ENCODE measurements at regions of chr10 and their contacts with region 1.

Region 1: GRCh38 chr10:97425964-97426775 is at the start of gene PGAM1:
- DNase-seq: peak; percentile 91 to 99 (median 93)
- ATAC-seq: peak; percentile 81
- H3K4me3 ChIP-seq: peak within 1 kb of the TSS; percentile 84
- H3K4me3 Mint-ChIP-seq: peak within 1 kb of the TSS; percentile 90
- H3K27ac ChIP-seq: peak within 1 kb of the TSS; percentile 85 to 86
- H3K27ac Mint-ChIP-seq: peak within 1 kb of the TSS; percentile 92
- H3K4me1 ChIP-seq: peaks cover 24% of the 10 kb centered on the region
- H3K4me1 Mint-ChIP-seq: peaks cover 44% of the 10 kb centered on the region
- H3K27me3 ChIP-seq: no peaks in the 10 kb centered on the region
- H3K27me3 Mint-ChIP-seq: no peaks in the 10 kb centered on the region
- CTCF ChIP-seq: peak; percentile 47
- total RNA-seq, gene PGAM1: 56.7 to 56.8 TPM

Region 2: GRCh38 chr10:97407211-97407951 is 18.8 kb before region 1 on chr10:
- CTCF ChIA-PET with region 1: interaction called, 12 read pairs
- POLR2A ChIA-PET with region 1: no interaction called
- intact Hi-C with region 1: loop called (anchors 1 to 2 kb)
- DNase-seq: peak in 8 of 9 experiments; percentile 41 to 87 (median 66)
- ATAC-seq: peak; percentile 99
- H3K4me3 ChIP-seq: peak overlapping the region in 1 of 2 experiments; percentile 27
- H3K4me3 Mint-ChIP-seq: peak overlapping the region; percentile 45
- H3K27ac ChIP-seq: peak overlapping the region in 1 of 2 experiments; percentile 51
- H3K27ac Mint-ChIP-seq: peak overlapping the region; percentile 37
- H3K4me1 ChIP-seq: peaks cover 5% of the 10 kb centered on the region
- H3K4me1 Mint-ChIP-seq: peaks cover 11% of the 10 kb centered on the region
- H3K27me3 ChIP-seq: no peaks in the 10 kb centered on the region
- H3K27me3 Mint-ChIP-seq: no peaks in the 10 kb centered on the region
- CTCF ChIP-seq: peak; percentile 86